GM12878 (cell line): ENCODE measurements at regions of chr20 and their contacts with region 1.

Region 1: GRCh38 chr20:47272893-47273590 is 83.5 kb downstream of the ZMYND8 start:
- DNase-seq: peak; percentile 46
- ATAC-seq: peak; percentile 59
- H3K4me3 ChIP-seq: no peak overlapping the region
- H3K27ac ChIP-seq: 0 out of 2 replicates have a peak overlapping the region, but pooled peaks have one; percentile 15
- H3K4me1 ChIP-seq: peaks cover 28% of the 10 kb centered on the region
- H3K27me3 ChIP-seq: no peaks in the 10 kb centered on the region
- CTCF ChIP-seq: peak; percentile 77 to 94 (median 81); a peak in 5 of 6 replicates
- EP300 ChIP-seq: no peak
- POLR2A ChIP-seq: no peak
- RAD21 ChIP-seq: peak; percentile 97

Region 2: GRCh38 chr20:47220161-47220582 is 52.9 kb before region 1 on chr20:
- CTCF ChIA-PET with region 1: interaction called, 11 read pairs
- POLR2A ChIA-PET with region 1: no interaction called
- RAD21 ChIA-PET with region 1: interaction called, 6 read pairs
- SMC1A ChIA-PET with region 1: interaction called, 3 read pairs
- in situ Hi-C with region 1: no loop called
- intact Hi-C with region 1: no loop called
- DNase-seq: no peak
- ATAC-seq: peak; percentile 87
- H3K4me3 ChIP-seq: no peak overlapping the region
- H3K27ac ChIP-seq: no peak overlapping the region
- H3K4me1 ChIP-seq: no peaks in the 10 kb centered on the region; the same call in 1 of the 2 replicates
- H3K27me3 ChIP-seq: no peaks in the 10 kb centered on the region
- CTCF ChIP-seq: peak; percentile 35 to 74 (median 64); a peak in 5 of 6 replicates
- EP300 ChIP-seq: no peak
- POLR2A ChIP-seq: no peak
- RAD21 ChIP-seq: peak; percentile 57

Region 3: GRCh38 chr20:47290008-47290407 is 17.0 kb after region 1 on chr20:
- CTCF ChIA-PET with region 1: interaction called, 11 read pairs
- POLR2A ChIA-PET with region 1: interaction called, 4 read pairs
- RAD21 ChIA-PET with region 1: interaction called, 5 read pairs
- SMC1A ChIA-PET with region 1: interaction called, 43 read pairs
- in situ Hi-C with region 1: no loop called
- intact Hi-C with region 1: no loop called
- DNase-seq: no peak
- ATAC-seq: no peak
- H3K4me3 ChIP-seq: no peak overlapping the region
- H3K27ac ChIP-seq: no peak overlapping the region
- H3K4me1 ChIP-seq: no peaks in the 10 kb centered on the region
- H3K27me3 ChIP-seq: no peaks in the 10 kb centered on the region
- CTCF ChIP-seq: no peak
- EP300 ChIP-seq: no peak
- POLR2A ChIP-seq: no peak
- RAD21 ChIP-seq: no peak

Region 4: DNA sequence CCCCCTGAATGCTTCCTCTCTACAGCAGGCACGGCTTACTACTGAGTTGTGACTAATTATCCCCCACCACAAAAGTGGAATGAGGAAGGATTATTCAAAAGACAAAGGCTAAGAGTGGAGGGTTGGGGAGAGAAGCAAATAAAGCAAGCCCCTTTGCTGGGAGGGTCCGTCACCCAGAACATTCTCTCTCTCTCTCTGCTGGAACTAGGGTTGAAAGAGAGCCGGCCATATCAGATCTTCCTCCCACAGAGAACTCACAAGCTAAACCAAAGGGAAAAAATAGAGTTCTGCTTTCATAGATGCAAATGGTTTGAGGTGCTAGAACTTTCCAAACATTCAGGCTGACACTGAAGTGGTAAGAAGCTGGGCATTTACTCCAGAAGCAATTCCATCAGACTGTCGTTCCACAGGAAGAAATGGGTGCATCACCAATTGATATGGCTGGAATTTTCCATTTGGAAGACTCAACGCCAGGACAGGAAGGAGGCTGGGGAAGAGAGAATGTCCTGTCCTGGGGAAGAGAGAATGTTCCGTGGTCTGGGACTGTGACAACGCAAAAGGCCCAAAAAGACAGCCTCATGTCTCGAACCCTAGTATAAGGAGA is 75.6 kb after region 1 on chr20:
- CTCF ChIA-PET with region 1: interaction called, 129 read pairs
- POLR2A ChIA-PET with region 1: interaction called, 13 read pairs
- RAD21 ChIA-PET with region 1: interaction called, 123 read pairs
- SMC1A ChIA-PET with region 1: interaction called, 72 read pairs
- in situ Hi-C with region 1: no loop called
- intact Hi-C with region 1: loop called (anchors 5 kb)
- DNase-seq: no peak
- ATAC-seq: peak; percentile 2; the same call in 1 of the 3 replicates
- H3K4me3 ChIP-seq: peak overlapping the region; percentile 77
- H3K27ac ChIP-seq: peak overlapping the region; percentile 99
- H3K4me1 ChIP-seq: peaks cover 33% of the 10 kb centered on the region
- H3K27me3 ChIP-seq: no peaks in the 10 kb centered on the region
- CTCF ChIP-seq: no peak
- EP300 ChIP-seq: no peak
- POLR2A ChIP-seq: no peak
- RAD21 ChIP-seq: no peak

Region 5: DNA sequence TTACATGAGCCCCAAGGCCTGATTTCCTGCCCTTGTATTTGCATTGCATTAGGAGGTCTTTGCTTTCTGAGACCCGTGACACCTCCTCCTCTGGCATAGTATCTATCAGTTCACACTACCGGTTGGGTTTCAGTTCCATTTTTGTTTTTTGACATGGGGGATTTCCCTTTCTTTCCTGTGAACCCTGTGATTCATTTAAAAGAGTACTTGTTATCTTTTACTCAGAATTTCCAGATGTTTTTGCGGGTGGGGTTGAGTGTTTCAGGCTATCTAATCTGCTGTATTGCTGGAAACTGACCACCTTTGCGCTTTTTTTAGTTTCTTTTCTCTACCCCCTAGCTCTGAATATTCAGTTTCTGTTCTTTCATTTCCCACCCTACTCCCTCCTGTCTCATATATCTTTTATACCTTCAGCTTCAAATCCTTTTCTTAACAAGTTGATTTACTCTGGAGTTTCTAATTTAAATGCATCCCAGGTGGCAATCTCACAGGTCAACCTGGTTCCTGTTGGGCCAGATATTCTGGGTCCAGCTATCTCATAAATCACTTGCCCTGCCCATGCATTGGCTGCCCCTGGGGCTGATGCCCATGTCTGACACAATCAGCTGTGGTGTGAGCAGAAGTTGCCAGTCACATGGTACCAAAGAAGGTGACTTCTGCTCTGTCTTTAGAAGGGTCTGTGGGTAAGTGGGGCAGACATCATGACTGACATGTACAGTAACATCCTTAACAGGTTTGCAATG is 214.3 kb after region 1 on chr20:
- CTCF ChIA-PET with region 1: interaction called, 13 read pairs
- POLR2A ChIA-PET with region 1: no interaction called
- RAD21 ChIA-PET with region 1: interaction called, 4 read pairs
- SMC1A ChIA-PET with region 1: interaction called, 3 read pairs
- in situ Hi-C with region 1: no loop called
- intact Hi-C with region 1: no loop called
- DNase-seq: peak; percentile 99
- ATAC-seq: peak; percentile 84
- H3K4me3 ChIP-seq: peak overlapping the region; percentile 43; the same call in 1 of the 2 replicates
- H3K27ac ChIP-seq: peak overlapping the region; percentile 98
- H3K4me1 ChIP-seq: peaks cover 56% of the 10 kb centered on the region
- H3K27me3 ChIP-seq: no peaks in the 10 kb centered on the region
- CTCF ChIP-seq: no peak
- EP300 ChIP-seq: peak; percentile 87 to 92
- POLR2A ChIP-seq: no peak
- RAD21 ChIP-seq: 0 out of 2 replicates have a peak, but pooled peaks have one; percentile 1

Region 6: DNA sequence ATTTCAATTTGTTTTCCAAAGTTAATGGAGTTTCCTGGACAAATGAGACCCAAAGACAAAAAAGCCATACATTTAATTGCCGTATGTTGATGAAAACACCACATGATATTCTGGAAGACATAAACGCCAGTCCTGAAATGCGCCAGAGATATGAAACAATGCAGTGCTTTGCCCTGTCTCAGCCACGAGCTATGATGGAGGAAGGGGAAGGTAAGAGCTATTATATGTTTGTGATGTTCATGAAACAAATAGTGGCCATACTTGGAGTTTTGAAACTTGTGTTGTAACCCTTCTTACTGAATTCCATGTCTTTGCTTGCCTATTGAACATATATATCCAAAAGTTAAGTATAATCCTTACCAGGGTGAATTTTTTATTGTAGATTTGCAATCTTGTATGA is 354.5 kb after region 1 on chr20:
- CTCF ChIA-PET with region 1: interaction called, 4 read pairs
- POLR2A ChIA-PET with region 1: interaction called, 4 read pairs
- RAD21 ChIA-PET with region 1: no interaction called
- SMC1A ChIA-PET with region 1: interaction called, 3 read pairs
- in situ Hi-C with region 1: loop called (anchors 5 kb)
- intact Hi-C with region 1: loop called (anchors 2 kb)
- DNase-seq: no peak
- ATAC-seq: no peak
- H3K4me3 ChIP-seq: no peak overlapping the region
- H3K27ac ChIP-seq: no peak overlapping the region
- H3K4me1 ChIP-seq: no peaks in the 10 kb centered on the region
- H3K27me3 ChIP-seq: no peaks in the 10 kb centered on the region
- CTCF ChIP-seq: no peak
- EP300 ChIP-seq: no peak
- POLR2A ChIP-seq: no peak
- RAD21 ChIP-seq: no peak